ENCODE measurements at regions of chr19 and their contacts with region 1.

Region 1: DNA sequence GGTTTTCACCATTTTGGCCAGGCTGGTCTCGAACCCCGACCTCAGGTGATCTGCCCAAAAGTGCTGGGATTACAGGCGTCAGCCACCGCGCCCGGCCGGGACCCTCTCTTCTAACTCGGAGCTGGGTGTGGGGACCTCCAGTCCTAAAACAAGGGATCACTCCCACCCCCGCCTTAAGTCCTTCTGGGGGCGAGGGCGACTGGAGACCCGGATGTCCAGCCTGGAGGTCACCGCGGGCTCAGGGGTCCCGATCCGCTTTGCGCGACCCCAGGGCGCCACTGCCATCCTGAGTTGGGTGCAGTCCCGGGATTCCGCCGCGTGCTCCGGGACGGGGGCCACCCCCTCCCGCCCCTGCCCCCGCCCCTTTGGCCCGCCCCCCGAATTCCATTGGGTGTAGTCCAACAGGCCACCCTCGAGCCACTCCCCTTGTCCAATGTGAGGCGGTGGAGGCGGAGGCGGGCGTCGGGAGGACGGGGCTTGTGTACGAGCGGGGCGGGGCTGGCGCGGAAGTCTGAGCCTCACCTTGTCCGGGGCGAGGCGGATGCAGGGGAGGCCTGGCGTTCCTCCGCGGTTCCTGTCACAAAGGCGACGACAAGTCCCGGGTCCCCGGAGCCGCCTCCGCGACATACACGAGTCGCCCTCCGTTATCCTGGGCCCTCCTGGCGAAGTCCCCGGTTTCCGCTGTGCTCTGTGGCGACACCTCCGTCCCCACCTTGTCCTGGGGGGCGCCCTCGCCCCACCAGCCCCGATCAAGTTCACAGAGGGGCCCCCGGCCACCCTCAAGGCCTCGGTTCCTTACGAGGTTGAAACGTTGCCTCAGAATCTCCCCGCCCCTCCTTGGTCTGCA is 1.0 kb downstream of the LDLR start:
- DNase-seq: peak; percentile 91
- H3K4me3 ChIP-seq: peak overlapping the region; percentile 58 to 96 (median 68)
- H3K27ac ChIP-seq: peak overlapping the region; percentile 87
- H3K4me1 ChIP-seq: peaks cover 60% of the 10 kb centered on the region
- H3K27me3 ChIP-seq: no peaks in the 10 kb centered on the region
- CTCF ChIP-seq: no peak
- POLR2A ChIP-seq: peak; percentile 68

Region 2: GRCh38 chr19:11050323-11051114 is 39.8 kb before region 1 on chr19:
- CTCF ChIA-PET with region 1: interaction called, 4 read pairs
- POLR2A ChIA-PET with region 1: no interaction called
- dilution Hi-C with region 1: no loop called
- intact Hi-C with region 1: loop called (anchors 5 kb)
- DNase-seq: no peak
- H3K4me3 ChIP-seq: no peak overlapping the region
- H3K27ac ChIP-seq: no peak overlapping the region
- H3K4me1 ChIP-seq: no peaks in the 10 kb centered on the region
- H3K27me3 ChIP-seq: no peaks in the 10 kb centered on the region
- CTCF ChIP-seq: no peak
- POLR2A ChIP-seq: no peak

Region 3: DNA sequence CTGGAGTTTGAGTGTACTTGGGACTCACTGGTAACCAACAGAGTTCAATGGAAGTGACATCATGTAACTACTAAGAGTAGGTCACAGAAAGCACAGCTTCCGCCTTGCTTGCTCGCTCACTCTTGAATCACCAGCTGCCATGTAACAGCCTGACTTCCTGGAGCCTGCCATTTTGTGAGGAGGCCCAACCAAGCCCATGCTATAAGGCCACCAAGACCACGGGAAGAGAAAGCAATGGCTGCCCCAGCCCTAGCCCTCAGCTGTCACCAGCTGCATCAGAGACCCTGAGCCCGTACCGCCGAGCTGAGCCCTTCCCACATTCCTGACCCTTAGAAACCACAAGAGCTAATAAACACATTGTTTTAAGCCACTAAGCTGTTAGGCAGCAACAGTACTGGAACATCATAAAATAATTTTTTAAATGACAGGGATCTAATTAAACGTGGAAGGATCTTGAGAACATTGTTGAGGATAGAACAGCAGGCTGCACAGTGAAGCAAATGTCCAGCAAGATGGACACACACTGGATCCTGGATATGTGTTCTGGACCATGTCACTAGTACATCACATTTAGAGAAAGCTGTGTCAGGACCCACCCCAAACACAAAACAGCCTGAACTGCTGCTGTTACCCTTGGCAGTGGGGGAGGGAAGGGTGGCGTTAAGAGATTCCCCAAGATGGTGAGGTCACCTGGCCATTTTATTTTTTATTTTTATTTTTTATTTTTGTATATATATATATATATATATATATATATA is 22.7 kb before region 1 on chr19:
- CTCF ChIA-PET with region 1: interaction called, 3 read pairs
- POLR2A ChIA-PET with region 1: interaction called, 10 read pairs
- dilution Hi-C with region 1: no loop called
- intact Hi-C with region 1: no loop called
- DNase-seq: no peak
- H3K4me3 ChIP-seq: no peak overlapping the region
- H3K27ac ChIP-seq: no peak overlapping the region
- H3K4me1 ChIP-seq: no peaks in the 10 kb centered on the region
- H3K27me3 ChIP-seq: no peaks in the 10 kb centered on the region
- CTCF ChIP-seq: no peak
- POLR2A ChIP-seq: no peak